ENCODE measurements at regions of chr2 and their contacts with region 1.

Region 1: GRCh38 chr2:39593439-39594393 is 72.0 kb upstream of the TMEM178A start:
- DNase-seq: peak in 4 of 5 donors; percentile 42 to 63 (median 56)
- ATAC-seq: peak; percentile 30 to 93 (median 87)
- H3K4me3 ChIP-seq: no peak overlapping the region
- H3K27ac ChIP-seq: no peak overlapping the region
- H3K4me1 ChIP-seq: peaks cover 0 to 5% (median 2%) of the 10 kb centered on the region in 12 donors
- H3K27me3 ChIP-seq: no peaks in the 10 kb centered on the region
- CTCF ChIP-seq: peak; percentile 34 to 75 (median 66)
- POLR2A ChIP-seq: no peak

Region 2: DNA sequence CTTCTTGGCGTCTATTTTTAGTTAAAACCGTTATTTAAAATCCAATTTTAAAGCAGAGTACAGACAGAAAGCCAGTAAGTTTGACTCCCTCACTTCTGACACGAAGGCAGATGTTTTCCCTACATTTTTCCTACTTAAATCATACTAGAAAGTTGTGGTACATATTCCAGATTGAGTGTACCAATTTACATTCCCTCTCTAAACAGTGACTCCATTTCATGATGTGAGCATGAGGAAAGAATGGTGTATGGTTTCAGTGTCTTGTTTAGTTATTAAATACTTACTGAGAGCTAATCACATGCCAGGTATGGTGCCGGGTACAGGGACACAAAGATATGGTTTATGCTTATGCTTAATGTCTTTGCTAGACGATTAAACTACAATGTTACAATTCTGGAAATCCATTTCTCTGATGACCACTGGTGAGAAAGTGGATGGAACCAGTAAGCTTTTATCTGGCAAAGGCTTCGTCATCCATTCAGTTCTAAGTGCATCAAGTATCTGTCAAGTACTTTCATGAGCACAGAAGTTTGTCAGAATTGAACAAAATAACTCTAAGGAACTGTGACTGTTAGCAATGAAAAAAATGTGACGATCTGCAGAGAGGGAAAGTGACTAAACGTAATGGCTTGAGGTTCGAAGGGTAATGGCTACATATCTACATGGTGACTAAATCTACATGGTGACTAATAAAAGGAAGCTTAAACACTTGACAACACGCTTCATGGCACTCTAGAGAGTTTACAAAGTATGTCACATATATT is 182.4 kb before region 1 on chr2:
- intact Hi-C with region 1: no loop called
- DNase-seq: no peak
- ATAC-seq: peak in 1 of 4 donors; percentile 30
- H3K4me3 ChIP-seq: no peak overlapping the region
- H3K27ac ChIP-seq: peak overlapping the region in 3 of 12 donors; percentile 9 to 48 (median 39)
- H3K4me1 ChIP-seq: peaks cover 5 to 98% (median 73%) of the 10 kb centered on the region in 12 donors
- H3K27me3 ChIP-seq: no peaks in the 10 kb centered on the region
- CTCF ChIP-seq: no peak
- POLR2A ChIP-seq: no peak

Region 3: DNA sequence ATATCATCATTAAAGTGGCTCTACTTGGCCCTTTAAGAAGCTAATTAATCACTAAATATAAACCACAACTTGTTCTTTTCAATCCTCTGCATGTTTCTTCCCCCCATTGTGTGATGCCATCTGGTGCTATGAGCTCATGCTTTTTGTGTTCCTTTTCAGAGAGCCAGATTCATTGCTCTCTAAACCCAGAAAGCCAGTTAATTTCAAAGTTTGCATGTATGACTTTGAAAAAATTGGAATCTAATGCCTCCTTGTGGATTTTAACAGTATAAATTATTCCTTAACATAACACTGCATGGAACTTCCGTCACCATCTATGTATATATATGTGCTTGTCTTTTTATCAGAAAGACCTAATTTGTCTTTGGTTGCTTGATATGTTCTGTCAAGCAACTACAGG is 103.1 kb after region 1 on chr2:
- intact Hi-C with region 1: loop called (anchors 1 to 10 kb)
- DNase-seq: no peak
- ATAC-seq: peak; percentile 47 to 77 (median 70)
- H3K4me3 ChIP-seq: no peak overlapping the region
- H3K27ac ChIP-seq: peak overlapping the region in 11 of 12 donors; percentile 33 to 60 (median 47)
- H3K4me1 ChIP-seq: peaks cover 0 to 31% (median 14%) of the 10 kb centered on the region in 12 donors
- H3K27me3 ChIP-seq: no peaks in the 10 kb centered on the region
- CTCF ChIP-seq: peak; percentile 19 to 67 (median 56)
- POLR2A ChIP-seq: no peak

Region 4: GRCh38 chr2:39728941-39729351 is 135.2 kb after region 1 on chr2:
- intact Hi-C with region 1: loop called in 3 of 10 experiments (anchors 10 kb)
- DNase-seq: peak in 2 of 5 donors; percentile 28 to 39
- ATAC-seq: peak in 1 of 4 donors; percentile 40
- H3K4me3 ChIP-seq: no peak overlapping the region
- H3K27ac ChIP-seq: no peak overlapping the region
- H3K4me1 ChIP-seq: peaks cover 0 to 19% (median 2%) of the 10 kb centered on the region in 12 donors
- H3K27me3 ChIP-seq: no peaks in the 10 kb centered on the region
- CTCF ChIP-seq: peak; percentile 34 to 72 (median 60)
- POLR2A ChIP-seq: no peak